Transverse colon (tissue), 4 donors: ENCODE measurements at regions of chr14 and their contacts with region 1.

Region 1: GRCh38 chr14:99225436-99226203 is 46.4 kb downstream of the BCL11B start:
- DNase-seq: no peak
- H3K4me3 ChIP-seq: no peak overlapping the region
- H3K27ac ChIP-seq: no peak overlapping the region
- H3K4me1 ChIP-seq: peaks cover 0 to 13% (median 2%) of the 10 kb centered on the region in 4 donors
- H3K27me3 ChIP-seq: no peaks in the 10 kb centered on the region
- CTCF ChIP-seq: no peak
- EP300 ChIP-seq: no peak
- POLR2A ChIP-seq: no peak

Region 2: DNA sequence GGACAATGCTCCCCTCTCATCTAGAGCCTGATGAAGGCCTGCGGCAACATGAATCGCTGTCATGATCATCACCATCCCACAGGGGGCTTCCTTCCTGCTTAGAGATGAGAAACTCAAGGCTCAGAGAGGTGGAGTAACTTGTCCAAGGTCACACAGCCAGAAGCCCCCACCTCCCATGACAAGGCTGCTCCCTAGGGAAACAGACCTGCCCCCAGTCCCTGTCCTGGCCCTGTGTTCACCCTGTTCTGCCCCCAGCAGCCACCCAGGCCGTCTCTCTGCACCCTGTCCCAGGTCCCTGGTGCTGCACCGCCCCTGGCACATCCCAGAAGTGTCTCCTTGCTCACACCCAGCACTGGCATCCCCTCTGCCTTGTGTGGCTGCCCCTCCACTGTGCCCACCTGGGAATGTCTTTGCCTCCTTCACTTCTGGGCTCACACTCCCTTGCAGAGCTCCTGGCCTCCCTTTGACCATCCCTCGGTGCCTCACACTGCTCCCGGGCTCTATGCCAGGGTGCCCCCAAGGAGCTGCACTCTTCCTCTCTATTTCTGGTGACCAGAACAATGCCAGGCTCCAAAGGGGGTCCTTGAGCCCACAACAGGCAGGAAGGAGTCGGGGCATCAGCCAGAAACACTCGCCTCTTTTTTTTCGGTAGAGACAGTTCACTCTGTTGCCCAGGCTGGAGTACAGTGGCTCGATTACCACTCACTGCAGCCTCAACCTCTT is 24.1 kb before region 1 on chr14:
- in situ Hi-C with region 1: no loop called
- intact Hi-C with region 1: loop called (anchors 1 kb)
- DNase-seq: no peak
- H3K4me3 ChIP-seq: no peak overlapping the region
- H3K27ac ChIP-seq: no peak overlapping the region
- H3K4me1 ChIP-seq: no peaks in the 10 kb centered on the region
- H3K27me3 ChIP-seq: no peaks in the 10 kb centered on the region
- CTCF ChIP-seq: no peak
- EP300 ChIP-seq: no peak
- POLR2A ChIP-seq: no peak